Right lobe of liver (tissue), 6 donors: ENCODE measurements at regions of chr2 and their contacts with region 1.

Region 1: DNA sequence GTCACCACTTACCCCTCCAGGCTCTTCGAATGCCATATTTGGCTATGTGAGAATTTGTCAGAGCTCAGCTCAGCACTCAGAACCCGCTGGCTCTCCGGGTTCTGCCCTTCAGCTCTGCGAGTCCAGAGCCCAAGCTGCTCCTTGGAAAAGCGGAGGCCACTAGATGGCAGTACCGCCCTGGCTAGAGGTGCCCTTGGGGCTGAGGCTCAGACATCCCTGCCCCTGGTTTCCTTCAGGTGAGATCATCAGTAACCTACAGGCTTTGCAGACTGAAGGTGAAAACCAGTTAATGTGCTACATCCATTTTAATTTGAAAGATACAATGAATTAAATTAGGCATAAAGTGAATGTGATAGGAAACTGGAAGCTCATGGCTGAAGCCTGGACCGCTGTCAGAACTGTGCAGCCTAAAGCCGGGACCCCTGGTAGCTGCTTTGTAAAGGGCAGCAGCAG is 285.6 kb downstream of the AGAP1 start:
- DNase-seq: peak; percentile 75 to 80 (median 80)
- ATAC-seq: peak; percentile 96 to 98 (median 96)
- H3K4me3 ChIP-seq: no peak overlapping the region
- H3K27ac ChIP-seq: no peak overlapping the region
- H3K4me1 ChIP-seq: no peaks in the 10 kb centered on the region
- H3K27me3 ChIP-seq: no peaks in the 10 kb centered on the region
- CTCF ChIP-seq: peak; percentile 66 to 90 (median 88)
- POLR2A ChIP-seq: no peak

Region 2: GRCh38 chr2:235709124-235709813 is 70.2 kb before region 1 on chr2:
- intact Hi-C with region 1: no loop called
- DNase-seq: no peak
- ATAC-seq: peak in 1 of 4 donors; percentile 62
- H3K4me3 ChIP-seq: no peak overlapping the region
- H3K27ac ChIP-seq: no peak overlapping the region
- H3K4me1 ChIP-seq: no peaks in the 10 kb centered on the region
- H3K27me3 ChIP-seq: no peaks in the 10 kb centered on the region
- CTCF ChIP-seq: no peak
- POLR2A ChIP-seq: no peak

Region 3: DNA sequence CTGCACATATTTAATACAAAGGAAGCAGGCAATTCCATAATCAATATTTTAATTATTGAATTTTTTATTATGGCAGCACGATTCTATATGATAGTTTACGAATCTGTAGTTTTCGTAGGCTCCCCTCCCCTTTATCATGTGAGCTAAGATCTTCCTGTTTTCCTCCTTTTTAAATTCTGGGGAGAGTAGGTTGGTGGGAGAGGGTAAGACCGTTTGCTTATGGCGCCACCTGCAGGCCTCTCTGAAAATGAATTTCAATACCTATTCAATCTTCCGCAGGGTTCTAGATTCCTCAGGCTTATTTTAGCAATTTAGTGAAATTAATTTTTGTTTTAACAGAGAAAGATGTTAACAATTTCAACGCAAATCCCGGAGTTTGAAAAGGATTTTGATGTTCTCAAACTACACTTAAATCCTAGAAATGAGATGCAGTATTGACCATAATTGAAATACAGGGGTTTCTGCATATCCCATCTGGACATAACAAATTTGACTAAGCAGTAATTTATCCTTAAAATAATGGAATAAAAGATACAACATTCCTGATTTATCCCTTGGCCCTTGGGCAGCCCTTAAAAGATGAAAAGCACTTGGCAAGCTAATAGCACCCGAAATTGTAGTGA is 401.5 kb after region 1 on chr2:
- intact Hi-C with region 1: loop called (anchors 10 kb)
- DNase-seq: peak in 2 of 3 donors; percentile 54 to 58
- ATAC-seq: peak; percentile 61 to 73 (median 70)
- H3K4me3 ChIP-seq: no peak overlapping the region
- H3K27ac ChIP-seq: no peak overlapping the region
- H3K4me1 ChIP-seq: peaks cover 0 to 18% (median 0%) of the 10 kb centered on the region in 4 donors
- H3K27me3 ChIP-seq: peaks cover 0 to 34% of the 10 kb centered on the region in 2 donors
- CTCF ChIP-seq: peak; percentile 63 to 77 (median 69)
- POLR2A ChIP-seq: no peak